ENCODE measurements at regions of chrX and their contacts with region 1.

Region 1: DNA sequence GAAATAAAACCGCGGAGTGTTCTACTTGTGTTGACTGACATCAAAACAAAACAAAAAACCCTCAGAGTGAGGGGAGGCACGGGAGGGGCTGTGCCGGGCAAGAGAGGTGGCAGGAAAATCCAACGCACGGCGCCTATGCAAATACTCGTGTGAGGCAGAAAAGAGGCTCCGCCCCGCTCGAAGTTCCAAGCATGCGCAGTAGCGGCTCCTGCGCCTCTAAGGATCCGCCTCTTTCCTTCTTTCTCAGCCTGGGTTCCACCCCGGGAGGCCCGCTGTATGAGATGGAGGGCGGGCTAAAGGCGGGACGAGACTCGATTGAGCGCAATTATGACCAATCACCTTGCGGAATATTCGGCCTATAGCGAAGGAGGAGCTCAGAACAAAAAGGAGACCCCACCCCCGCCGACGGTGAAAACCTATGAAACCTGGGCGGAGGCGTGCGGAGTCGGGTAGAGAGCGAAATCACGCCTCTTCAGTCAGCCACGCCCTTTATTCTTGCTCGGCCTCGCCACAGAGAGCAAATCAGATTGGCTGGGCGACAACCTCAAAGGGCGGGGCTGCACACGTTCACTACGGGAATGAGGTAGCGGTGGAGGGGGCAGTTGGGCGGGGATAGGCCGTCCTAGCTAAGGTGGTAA is 720 bp upstream of the CDK16 start:
- DNase-seq: peak; percentile 96 to 97
- H3K4me3 ChIP-seq: peak overlapping the region; percentile 49
- H3K4me3 Mint-ChIP-seq: peak overlapping the region; percentile 84
- H3K27ac Mint-ChIP-seq: peak overlapping the region; percentile 91
- H3K4me1 ChIP-seq: no peaks in the 10 kb centered on the region
- H3K4me1 Mint-ChIP-seq: peaks cover 32% of the 10 kb centered on the region
- H3K27me3 ChIP-seq: no peaks in the 10 kb centered on the region
- H3K27me3 Mint-ChIP-seq: no peaks in the 10 kb centered on the region
- CTCF ChIP-seq: no peak

Region 2: GRCh38 chrX:47204970-47205369 is 12.8 kb before region 1 on chrX:
- CTCF ChIA-PET with region 1: interaction called, 3 read pairs
- POLR2A ChIA-PET with region 1: interaction called, 10 read pairs
- intact Hi-C with region 1: no loop called
- DNase-seq: no peak
- H3K4me3 ChIP-seq: no peak overlapping the region
- H3K4me3 Mint-ChIP-seq: no peak overlapping the region
- H3K27ac Mint-ChIP-seq: no peak overlapping the region
- H3K4me1 ChIP-seq: no peaks in the 10 kb centered on the region
- H3K4me1 Mint-ChIP-seq: no peaks in the 10 kb centered on the region
- H3K27me3 ChIP-seq: no peaks in the 10 kb centered on the region
- H3K27me3 Mint-ChIP-seq: no peaks in the 10 kb centered on the region
- CTCF ChIP-seq: no peak

Region 3: DNA sequence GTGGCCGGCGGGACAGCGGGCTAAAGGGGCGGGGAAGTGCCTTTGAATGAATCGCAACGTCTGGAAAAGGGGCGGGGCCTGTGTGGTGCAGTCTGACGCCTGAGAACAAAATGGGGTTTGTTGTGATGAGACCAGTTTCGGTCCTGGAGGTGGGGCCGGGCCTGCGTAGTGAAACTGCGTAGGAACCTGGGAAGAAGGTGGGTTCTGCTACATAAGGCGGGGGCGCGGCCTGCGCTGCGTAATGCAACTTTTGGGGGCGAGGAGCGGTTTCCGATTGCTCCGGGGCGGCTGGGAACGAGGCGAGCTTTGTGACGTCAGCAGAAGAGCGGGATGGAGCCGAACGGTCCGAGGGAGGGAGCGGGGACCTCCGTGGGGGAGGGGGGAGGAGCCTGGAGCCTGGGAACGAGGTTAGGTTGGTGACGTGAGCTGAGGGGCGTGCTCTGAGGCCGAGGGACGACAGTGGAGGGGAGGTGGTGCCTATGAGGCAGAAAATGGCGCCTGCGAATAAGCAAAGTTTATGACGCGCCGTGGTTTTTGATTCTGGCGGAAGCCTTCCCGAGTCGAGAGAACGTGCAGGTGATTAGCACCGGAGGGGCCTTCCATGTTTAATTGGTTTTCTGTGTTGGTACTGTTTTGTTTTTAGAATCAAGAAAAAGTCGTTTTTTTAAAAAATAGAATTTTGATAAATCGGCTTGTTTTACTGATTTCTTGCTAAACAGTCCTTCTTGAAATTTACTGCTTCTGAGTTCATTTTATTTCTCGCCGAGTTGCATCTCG is 15.8 kb after region 1 on chrX:
- CTCF ChIA-PET with region 1: no interaction called
- POLR2A ChIA-PET with region 1: interaction called, 35 read pairs
- intact Hi-C with region 1: loop called (anchors 2 kb)
- DNase-seq: peak; percentile 93 to 96
- H3K4me3 ChIP-seq: peak overlapping the region; percentile 73
- H3K4me3 Mint-ChIP-seq: peak overlapping the region; percentile 88
- H3K27ac Mint-ChIP-seq: peak overlapping the region; percentile 99
- H3K4me1 ChIP-seq: no peaks in the 10 kb centered on the region
- H3K4me1 Mint-ChIP-seq: peaks cover 14% of the 10 kb centered on the region
- H3K27me3 ChIP-seq: no peaks in the 10 kb centered on the region
- H3K27me3 Mint-ChIP-seq: no peaks in the 10 kb centered on the region
- CTCF ChIP-seq: no peak

Region 4: GRCh38 chrX:47311932-47312774 is 94.4 kb after region 1 on chrX:
- CTCF ChIA-PET with region 1: no interaction called
- POLR2A ChIA-PET with region 1: no interaction called
- intact Hi-C with region 1: loop called (anchors 1 kb)
- DNase-seq: peak; percentile 54 to 65
- H3K4me3 ChIP-seq: no peak overlapping the region
- H3K4me3 Mint-ChIP-seq: no peak overlapping the region
- H3K27ac Mint-ChIP-seq: no peak overlapping the region
- H3K4me1 ChIP-seq: no peaks in the 10 kb centered on the region
- H3K4me1 Mint-ChIP-seq: no peaks in the 10 kb centered on the region
- H3K27me3 ChIP-seq: no peaks in the 10 kb centered on the region
- H3K27me3 Mint-ChIP-seq: no peaks in the 10 kb centered on the region
- CTCF ChIP-seq: peak; percentile 58 to 63

Region 5: GRCh38 chrX:47384502-47384901 is 166.7 kb after region 1 on chrX:
- CTCF ChIA-PET with region 1: interaction called, 9 read pairs
- POLR2A ChIA-PET with region 1: no interaction called
- intact Hi-C with region 1: loop called (anchors 5 kb)
- DNase-seq: peak; percentile 40 to 59
- H3K4me3 ChIP-seq: no peak overlapping the region
- H3K4me3 Mint-ChIP-seq: no peak overlapping the region
- H3K27ac Mint-ChIP-seq: no peak overlapping the region
- H3K4me1 ChIP-seq: no peaks in the 10 kb centered on the region
- H3K4me1 Mint-ChIP-seq: no peaks in the 10 kb centered on the region
- H3K27me3 ChIP-seq: no peaks in the 10 kb centered on the region
- H3K27me3 Mint-ChIP-seq: no peaks in the 10 kb centered on the region
- CTCF ChIP-seq: peak; percentile 48 to 56

Region 6: GRCh38 chrX:47560831-47561652 is 343.3 kb after region 1 on chrX and contains the start of gene ARAF:
- CTCF ChIA-PET with region 1: no interaction called
- POLR2A ChIA-PET with region 1: interaction called, 13 read pairs
- intact Hi-C with region 1: no loop called
- DNase-seq: peak; percentile 97 to 99
- H3K4me3 ChIP-seq: peak within 1 kb of the TSS; percentile 64
- H3K4me3 Mint-ChIP-seq: peak within 1 kb of the TSS; percentile 98
- H3K27ac Mint-ChIP-seq: peak within 1 kb of the TSS; percentile 99
- H3K4me1 ChIP-seq: no peaks in the 10 kb centered on the region
- H3K4me1 Mint-ChIP-seq: peaks cover 7% of the 10 kb centered on the region
- H3K27me3 ChIP-seq: no peaks in the 10 kb centered on the region
- H3K27me3 Mint-ChIP-seq: no peaks in the 10 kb centered on the region
- CTCF ChIP-seq: no peak
- total RNA-seq, gene ARAF: 65.4 and 68.5 TPM in 2 replicates

Region 7: GRCh38 chrX:47650164-47651042 is 432.6 kb after region 1 on chrX and contains the start of gene ELK1:
- CTCF ChIA-PET with region 1: no interaction called
- POLR2A ChIA-PET with region 1: no interaction called
- intact Hi-C with region 1: loop called (anchors 10 kb)
- DNase-seq: peak; percentile 94 to 97
- H3K4me3 ChIP-seq: peak within 1 kb of the TSS; percentile 63
- H3K4me3 Mint-ChIP-seq: peak within 1 kb of the TSS; percentile 89
- H3K27ac Mint-ChIP-seq: peak within 1 kb of the TSS; percentile 89
- H3K4me1 ChIP-seq: 0 out of 2 replicates have a peak, but pooled peaks cover 3% of the 10 kb centered on the region
- H3K4me1 Mint-ChIP-seq: peaks cover 23% of the 10 kb centered on the region
- H3K27me3 ChIP-seq: no peaks in the 10 kb centered on the region
- H3K27me3 Mint-ChIP-seq: no peaks in the 10 kb centered on the region
- CTCF ChIP-seq: peak in 1 of 2 experiments; percentile 1
- total RNA-seq, gene ELK1: 28.9 and 29.3 TPM in 2 replicates

Measured in Caco-2 (cell line).